Colonic mucosa (tissue), 4 donors: ENCODE measurements at regions of chr19 and their contacts with region 1.

Region 1: GRCh38 chr19:9934132-9934950 is 2.0 kb downstream of the OLFM2 start:
- DNase-seq: peak; percentile 81
- H3K4me3 ChIP-seq: no peak overlapping the region
- H3K27ac ChIP-seq: no peak overlapping the region
- H3K4me1 ChIP-seq: no peaks in the 10 kb centered on the region
- H3K27me3 ChIP-seq: peaks cover 22% of the 10 kb centered on the region
- CTCF ChIP-seq: peak; percentile 65

Region 2: GRCh38 chr19:9818734-9819589 is 115.4 kb before region 1 on chr19 and contains the start of gene FBXL12:
- intact Hi-C with region 1: no loop called
- DNase-seq: peak; percentile 100
- H3K4me3 ChIP-seq: peak within 1 kb of the TSS; percentile 99
- H3K27ac ChIP-seq: peak within 1 kb of the TSS; percentile 99
- H3K4me1 ChIP-seq: peaks cover 17% of the 10 kb centered on the region
- H3K27me3 ChIP-seq: no peaks in the 10 kb centered on the region
- CTCF ChIP-seq: no peak
- total RNA-seq, gene FBXL12: 30.5 to 30.7 TPM

Region 3: GRCh38 chr19:10027158-10027693 is 92.9 kb after region 1 on chr19:
- intact Hi-C with region 1: loop called (anchors 2 kb)
- DNase-seq: no peak
- H3K4me3 ChIP-seq: no peak overlapping the region
- H3K27ac ChIP-seq: no peak overlapping the region
- H3K4me1 ChIP-seq: no peaks in the 10 kb centered on the region
- H3K27me3 ChIP-seq: no peaks in the 10 kb centered on the region
- CTCF ChIP-seq: no peak

Region 4: DNA sequence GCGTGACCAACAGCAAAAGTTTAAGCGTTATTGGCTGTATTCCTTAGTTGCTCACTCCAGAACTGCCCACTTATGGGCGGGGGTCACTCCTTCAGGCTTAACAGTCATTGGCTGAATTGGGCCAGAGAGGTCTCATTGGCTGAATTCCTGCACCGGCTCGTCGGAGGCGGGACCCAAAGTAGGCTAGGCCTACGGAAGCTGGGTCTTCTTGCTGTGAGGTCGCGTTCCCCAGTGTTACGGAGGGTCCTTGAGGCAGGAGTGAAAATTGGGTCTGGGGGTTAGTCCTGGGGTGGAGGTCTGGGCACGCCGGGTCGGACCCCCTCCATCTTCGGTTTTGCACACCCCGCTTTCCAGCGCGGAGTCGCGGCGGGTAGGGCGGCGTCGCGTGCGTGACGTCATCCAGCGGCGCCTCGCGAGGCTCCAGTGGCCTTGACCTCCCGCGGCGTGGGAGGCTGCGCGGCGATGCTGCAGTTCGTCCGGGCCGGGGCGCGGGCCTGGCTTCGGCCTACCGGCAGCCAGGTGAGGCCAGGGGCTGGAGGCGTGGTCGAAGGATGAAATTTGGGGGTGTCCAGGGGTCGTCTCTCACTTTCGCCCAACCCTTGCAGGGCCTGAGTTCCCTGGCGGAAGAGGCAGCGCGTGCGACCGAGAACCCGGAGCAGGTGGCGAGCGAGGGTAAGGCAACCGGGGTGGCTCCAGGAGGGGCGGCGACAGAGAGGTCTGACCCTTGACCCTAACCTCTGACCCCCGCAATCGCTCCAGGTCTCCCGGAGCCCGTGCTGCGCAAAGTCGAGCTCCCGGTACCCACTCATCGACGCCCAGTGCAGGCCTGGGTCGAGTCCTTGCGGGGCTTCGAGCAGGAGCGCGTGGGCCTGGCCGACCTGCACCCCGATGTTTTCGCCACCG is 317.7 kb after region 1 on chr19 and contains the start of gene MRPL4:
- intact Hi-C with region 1: loop called (anchors 5 kb)
- DNase-seq: peak; percentile 98
- H3K4me3 ChIP-seq: peak within 1 kb of the TSS; percentile 90
- H3K27ac ChIP-seq: peak within 1 kb of the TSS; percentile 80
- H3K4me1 ChIP-seq: peaks cover 5% of the 10 kb centered on the region
- H3K27me3 ChIP-seq: no peaks in the 10 kb centered on the region
- CTCF ChIP-seq: no peak
- total RNA-seq, gene MRPL4: 48.9 to 116 TPM